Transverse colon (tissue), 4 donors: ENCODE measurements at regions of chr6 and their contacts with region 1.

Region 1: GRCh38 chr6:149405823-149406765 is 6.0 kb downstream of the SUMO4 start:
- DNase-seq: no peak
- H3K4me3 ChIP-seq: no peak overlapping the region
- H3K27ac ChIP-seq: peak overlapping the region in 1 of 4 donors; percentile 19
- H3K4me1 ChIP-seq: peaks cover 0 to 7% (median 2%) of the 10 kb centered on the region in 4 donors
- H3K27me3 ChIP-seq: no peaks in the 10 kb centered on the region
- CTCF ChIP-seq: no peak
- EP300 ChIP-seq: no peak
- POLR2A ChIP-seq: no peak

Region 2: DNA sequence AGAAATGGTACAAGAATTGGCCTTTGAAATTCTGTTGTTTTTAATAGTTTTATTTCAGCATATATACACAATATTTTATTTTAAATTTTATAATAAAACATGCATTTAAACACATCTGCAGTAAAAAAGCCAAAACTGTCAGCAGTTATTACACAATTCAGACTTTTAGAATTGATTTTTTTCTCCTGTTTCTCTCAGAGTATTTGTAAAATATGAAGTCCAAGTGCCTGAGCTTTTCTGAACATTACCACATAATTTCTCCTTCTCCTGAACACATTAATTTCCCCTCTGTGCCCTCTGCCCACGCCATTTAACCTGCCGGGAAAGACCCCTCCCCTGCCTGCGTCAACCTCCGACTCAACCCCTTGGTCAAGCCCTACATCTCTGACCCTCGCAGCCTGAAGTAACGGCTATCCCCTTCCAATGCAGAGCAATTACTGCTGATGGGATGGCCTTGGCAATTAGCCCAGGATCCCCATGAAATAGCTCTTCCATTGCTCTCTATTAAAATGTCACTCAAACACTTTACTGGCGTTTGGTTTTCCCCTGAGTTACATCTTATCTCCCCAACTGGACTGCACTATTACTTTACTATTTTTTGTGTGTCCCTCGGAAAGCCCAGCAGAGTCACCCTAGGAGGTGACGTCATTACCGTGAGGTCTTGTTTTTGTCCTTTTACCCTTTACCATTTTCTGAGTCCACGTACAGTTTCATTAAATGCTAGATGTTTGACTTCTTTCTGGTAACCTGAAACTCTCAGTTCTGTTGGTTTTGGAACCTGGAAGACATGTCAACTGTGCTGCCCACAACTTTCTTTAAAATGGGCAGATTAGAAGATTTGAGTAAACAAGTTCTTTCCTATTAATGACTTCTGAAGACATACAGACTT is 235.3 kb before region 1 on chr6:
- in situ Hi-C with region 1: no loop called
- intact Hi-C with region 1: loop called (anchors 5 kb)
- DNase-seq: peak; percentile 13
- H3K4me3 ChIP-seq: no peak overlapping the region
- H3K27ac ChIP-seq: peak overlapping the region in 2 of 4 donors; percentile 25 to 54
- H3K4me1 ChIP-seq: peaks cover 0 to 8% (median 0%) of the 10 kb centered on the region in 4 donors
- H3K27me3 ChIP-seq: no peaks in the 10 kb centered on the region
- CTCF ChIP-seq: no peak
- EP300 ChIP-seq: no peak
- POLR2A ChIP-seq: no peak

Region 3: GRCh38 chr6:149347067-149347466 is 59.0 kb before region 1 on chr6:
- in situ Hi-C with region 1: no loop called
- intact Hi-C with region 1: no loop called
- DNase-seq: no peak
- H3K4me3 ChIP-seq: no peak overlapping the region
- H3K27ac ChIP-seq: no peak overlapping the region
- H3K4me1 ChIP-seq: peaks cover 10 to 45% (median 13%) of the 10 kb centered on the region in 4 donors
- H3K27me3 ChIP-seq: no peaks in the 10 kb centered on the region
- CTCF ChIP-seq: no peak
- EP300 ChIP-seq: no peak
- POLR2A ChIP-seq: no peak

Region 4: DNA sequence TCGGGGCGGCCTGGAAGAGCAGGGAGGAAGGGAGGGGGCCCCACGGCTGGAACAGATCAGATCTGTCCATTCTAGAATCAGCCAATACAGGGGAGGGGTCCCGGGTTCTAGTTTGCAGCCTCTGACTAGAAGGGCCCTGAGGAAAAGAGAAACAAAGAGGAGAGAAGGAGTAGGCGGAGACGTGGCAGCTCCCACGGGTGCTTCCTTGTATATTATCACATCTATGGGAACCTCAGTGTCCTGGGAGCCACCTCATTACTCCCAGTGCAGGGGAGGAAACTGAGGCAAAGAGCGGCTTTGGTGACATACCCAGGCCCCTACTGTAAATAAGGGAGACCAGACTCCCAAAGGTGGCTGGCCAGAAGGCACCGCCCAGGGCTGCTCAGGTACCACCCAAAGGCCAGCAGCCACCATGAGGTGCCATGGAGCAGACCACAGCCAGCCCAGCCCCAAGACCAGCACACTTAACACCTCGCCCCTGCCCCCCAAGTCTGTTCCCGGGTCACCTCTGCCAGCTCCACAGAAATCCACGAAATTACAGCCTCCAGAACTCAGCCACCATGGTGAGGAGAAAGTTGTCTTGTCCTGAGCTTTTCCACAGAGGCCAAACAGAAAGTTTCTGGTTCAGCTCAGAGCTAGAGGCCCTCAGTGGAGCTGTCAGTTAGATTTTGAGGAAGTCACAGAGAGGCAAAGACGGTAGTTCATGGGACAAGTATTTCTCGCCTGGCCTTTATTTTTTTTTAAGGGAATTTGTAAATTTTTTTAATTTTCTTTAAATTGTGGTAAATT is 76.6 kb after region 1 on chr6:
- in situ Hi-C with region 1: no loop called
- intact Hi-C with region 1: no loop called
- DNase-seq: no peak
- H3K4me3 ChIP-seq: peak overlapping the region in 3 of 4 donors; percentile 12 to 42 (median 22)
- H3K27ac ChIP-seq: peak overlapping the region; percentile 71 to 81 (median 75)
- H3K4me1 ChIP-seq: peaks cover 4 to 42% (median 20%) of the 10 kb centered on the region in 4 donors
- H3K27me3 ChIP-seq: no peaks in the 10 kb centered on the region
- CTCF ChIP-seq: no peak
- EP300 ChIP-seq: no peak
- POLR2A ChIP-seq: no peak

Region 5: GRCh38 chr6:149614337-149614736 is 208.2 kb after region 1 on chr6:
- in situ Hi-C with region 1: no loop called
- intact Hi-C with region 1: no loop called
- DNase-seq: no peak
- H3K4me3 ChIP-seq: no peak overlapping the region
- H3K27ac ChIP-seq: no peak overlapping the region
- H3K4me1 ChIP-seq: no peaks in the 10 kb centered on the region
- H3K27me3 ChIP-seq: no peaks in the 10 kb centered on the region
- CTCF ChIP-seq: no peak
- EP300 ChIP-seq: no peak
- POLR2A ChIP-seq: no peak